Activated T-helper 2 cell treated with anti-CD3 and anti-CD28 coated beads, Interferon-gamma antibody, Interleukin-2, Interleukin-4, amounts not matched to agents 10 μg/mL and 5 μg/mL and 100 μg/mL, durations not matched to agents 14 hours and 24 hours and 36 hours (primary cell): ENCODE measurements at regions of chr2 and their contacts with region 1.

Region 1: DNA sequence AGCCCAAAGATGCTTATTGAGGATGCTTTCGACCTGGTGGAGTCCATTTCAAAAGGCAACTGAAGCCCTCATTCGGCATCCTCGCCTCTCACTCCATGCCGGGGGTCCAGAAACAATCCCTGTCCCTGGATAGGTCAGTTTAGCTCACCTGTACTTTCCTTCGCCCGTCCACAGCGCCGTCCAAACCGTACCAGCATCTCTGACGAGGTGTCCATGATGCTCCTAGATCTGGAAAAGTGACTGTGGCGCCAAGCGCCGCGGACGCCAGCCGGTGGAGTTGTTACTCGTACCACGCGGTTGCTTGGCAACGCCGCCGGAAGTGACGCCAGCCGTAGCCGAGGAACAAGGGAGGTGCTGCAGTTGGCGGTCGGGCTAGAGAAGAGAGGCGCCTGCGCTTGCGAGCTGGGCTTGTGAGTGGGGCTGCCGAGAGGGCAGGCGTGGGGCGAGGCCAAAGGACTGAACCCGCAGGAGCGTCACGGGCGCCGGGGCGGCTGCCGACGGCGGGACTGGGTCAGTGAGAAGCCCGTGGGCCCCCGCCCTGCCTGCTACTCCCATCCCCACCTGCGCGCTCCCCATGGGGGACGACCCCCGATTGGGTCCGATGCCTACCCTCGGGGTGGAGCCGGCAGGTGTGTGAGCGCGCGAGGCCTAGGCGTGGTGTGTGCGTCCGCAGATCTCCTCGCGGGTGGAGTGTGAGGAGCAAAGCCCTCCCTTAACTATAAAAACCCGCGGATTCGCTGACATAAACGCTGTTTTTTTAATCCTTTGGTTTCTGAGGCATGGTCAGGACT is at the starts of genes CFAP210 and PHOSPHO2:
- DNase-seq: peak; percentile 98
- H3K4me3 Mint-ChIP-seq: peak within 1 kb of the TSS; percentile 79
- H3K27ac Mint-ChIP-seq: peak within 1 kb of the TSS; percentile 77
- H3K4me1 Mint-ChIP-seq: peaks cover 15% of the 10 kb centered on the region
- H3K27me3 Mint-ChIP-seq: peaks cover 26% of the 10 kb centered on the region
- total RNA-seq, gene CFAP210: not detected in 2 replicates
- total RNA-seq, gene PHOSPHO2: 3.7 and 4.2 TPM in 2 replicates

Region 2: GRCh38 chr2:169584005-169584877 is 110.1 kb before region 1 on chr2 and contains the start of gene PPIG:
- intact Hi-C with region 1: loop called (anchors 1 kb)
- DNase-seq: peak; percentile 79
- H3K4me3 Mint-ChIP-seq: peak within 1 kb of the TSS; percentile 98
- H3K27ac Mint-ChIP-seq: peak within 1 kb of the TSS; percentile 99
- H3K4me1 Mint-ChIP-seq: peaks cover 19% of the 10 kb centered on the region
- H3K27me3 Mint-ChIP-seq: peaks cover 2% of the 10 kb centered on the region
- total RNA-seq, gene PPIG: 57.5 and 57.6 TPM in 2 replicates

Region 3: GRCh38 chr2:169683054-169683424 is 11.3 kb before region 1 on chr2:
- intact Hi-C with region 1: loop called (anchors 1 kb)
- DNase-seq: no peak
- H3K4me3 Mint-ChIP-seq: no peak overlapping the region
- H3K27ac Mint-ChIP-seq: peak overlapping the region; percentile 35
- H3K4me1 Mint-ChIP-seq: peaks cover 22% of the 10 kb centered on the region
- H3K27me3 Mint-ChIP-seq: peaks cover 4% of the 10 kb centered on the region

Region 4: DNA sequence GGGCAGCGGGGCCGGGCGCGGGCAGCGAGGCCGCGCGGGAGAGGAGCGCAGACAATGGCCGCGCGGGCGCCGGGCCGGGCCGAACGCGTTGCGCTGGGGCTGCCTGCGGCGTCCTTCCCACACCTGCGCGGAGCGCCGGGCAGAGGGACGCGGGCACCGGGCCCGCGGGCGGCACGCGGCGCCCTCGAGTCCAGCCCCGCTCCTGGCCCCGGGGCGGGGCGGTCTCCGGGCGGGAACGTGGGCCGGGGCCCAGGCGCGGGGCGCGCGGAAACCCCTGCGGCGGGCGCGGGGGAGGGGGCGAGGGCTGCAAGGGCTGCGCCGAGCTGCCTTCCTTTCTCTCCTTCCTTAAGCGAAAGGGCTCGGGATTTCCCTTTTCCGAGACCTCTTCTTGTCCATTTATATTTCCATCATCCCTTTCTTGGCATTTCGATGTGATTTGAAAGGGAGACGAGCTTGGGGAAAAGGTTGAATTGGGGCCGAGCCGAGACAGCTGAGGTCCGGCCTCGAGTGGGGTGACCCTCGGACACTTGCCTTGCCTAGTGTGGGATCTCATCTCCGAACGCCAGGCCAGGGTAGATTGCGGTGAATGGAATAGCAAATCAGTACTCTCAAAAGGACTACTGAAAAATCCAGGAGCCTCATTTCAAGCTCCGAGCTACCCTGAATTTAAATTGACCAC is 40.0 kb after region 1 on chr2:
- intact Hi-C with region 1: loop called (anchors 2 kb)
- DNase-seq: no peak
- H3K4me3 Mint-ChIP-seq: peak overlapping the region; percentile 78
- H3K27ac Mint-ChIP-seq: no peak overlapping the region
- H3K4me1 Mint-ChIP-seq: peaks cover 20% of the 10 kb centered on the region
- H3K27me3 Mint-ChIP-seq: peaks cover 38% of the 10 kb centered on the region

Region 5: GRCh38 chr2:169849720-169850119 is 155.4 kb after region 1 on chr2:
- intact Hi-C with region 1: no loop called
- DNase-seq: no peak
- H3K4me3 Mint-ChIP-seq: no peak overlapping the region
- H3K27ac Mint-ChIP-seq: no peak overlapping the region
- H3K4me1 Mint-ChIP-seq: peaks cover 6% of the 10 kb centered on the region
- H3K27me3 Mint-ChIP-seq: no peaks in the 10 kb centered on the region